Activated T-helper 1 cell treated with anti-CD3 and anti-CD28 coated beads, Interleukin-12 subunit alpha, Interleukin-12 subunit beta, Interleukin-2, Interleukin-4 antibody, amounts not matched to agents 30 ng/mL and 10 ng/mL and 1 ng/mL, durations not matched to agents 14 hours and 24 hours and 36 hours (primary cell): ENCODE measurements at regions of chr3 and their contacts with region 1.

Region 1: GRCh38 chr3:50611464-50612233 is at the start of gene CISH:
- DNase-seq: peak; percentile 98
- H3K4me3 Mint-ChIP-seq: peak within 1 kb of the TSS; percentile 99
- H3K27ac Mint-ChIP-seq: peak within 1 kb of the TSS; percentile 98
- H3K4me1 Mint-ChIP-seq: peaks cover 55% of the 10 kb centered on the region
- H3K27me3 Mint-ChIP-seq: no peaks in the 10 kb centered on the region
- total RNA-seq, gene CISH: 334 and 341 TPM in 2 replicates

Region 2: GRCh38 chr3:50337191-50337841 is 274.3 kb before region 1 on chr3:
- intact Hi-C with region 1: loop called (anchors 5 kb)
- DNase-seq: peak; percentile 96
- H3K4me3 Mint-ChIP-seq: peak overlapping the region; percentile 96
- H3K27ac Mint-ChIP-seq: peak overlapping the region; percentile 97
- H3K4me1 Mint-ChIP-seq: peaks cover 51% of the 10 kb centered on the region
- H3K27me3 Mint-ChIP-seq: no peaks in the 10 kb centered on the region

Region 3: DNA sequence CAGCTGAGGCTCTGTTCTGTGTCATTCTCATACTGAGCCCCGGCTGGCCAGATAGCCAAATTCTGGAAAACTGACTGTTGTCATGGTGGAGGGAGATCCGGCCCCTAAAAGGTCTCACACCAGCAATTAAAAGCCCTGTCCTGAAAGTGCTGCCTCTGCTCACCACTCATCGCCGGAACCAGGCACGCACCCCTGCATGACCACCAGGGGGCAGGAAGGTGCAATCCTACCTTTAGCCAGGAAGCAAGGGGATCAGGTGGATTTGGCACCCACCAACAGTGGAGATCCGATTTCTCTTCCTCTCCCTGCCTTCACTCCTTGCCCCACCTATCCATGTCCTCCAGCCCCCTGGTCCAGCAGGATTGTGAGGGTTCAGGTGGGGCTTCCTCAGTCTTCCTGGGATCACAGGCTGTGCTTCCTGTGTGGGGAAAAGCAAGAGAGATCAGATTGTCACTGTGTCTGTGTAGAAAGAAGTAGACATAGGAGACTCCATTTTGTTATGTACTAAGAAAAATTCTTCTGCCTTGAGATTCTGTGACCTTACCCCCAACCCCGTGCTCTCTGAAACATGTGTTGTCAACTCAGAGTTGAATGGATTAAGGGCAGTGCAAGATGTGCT is 92.1 kb before region 1 on chr3:
- intact Hi-C with region 1: loop called (anchors 1 kb)
- DNase-seq: peak; percentile 64
- H3K4me3 Mint-ChIP-seq: no peak overlapping the region
- H3K27ac Mint-ChIP-seq: no peak overlapping the region
- H3K4me1 Mint-ChIP-seq: peaks cover 5% of the 10 kb centered on the region
- H3K27me3 Mint-ChIP-seq: peaks cover 11% of the 10 kb centered on the region

Region 4: GRCh38 chr3:50600841-50601591 is 10.6 kb before region 1 on chr3:
- intact Hi-C with region 1: loop called (anchors 1 kb)
- DNase-seq: peak; percentile 81
- H3K4me3 Mint-ChIP-seq: peak overlapping the region; percentile 99
- H3K27ac Mint-ChIP-seq: peak overlapping the region; percentile 98
- H3K4me1 Mint-ChIP-seq: peaks cover 83% of the 10 kb centered on the region
- H3K27me3 Mint-ChIP-seq: no peaks in the 10 kb centered on the region

Region 5: GRCh38 chr3:50674349-50675178 is 62.9 kb after region 1 on chr3 and contains the start of gene DOCK3:
- intact Hi-C with region 1: loop called (anchors 2 kb)
- DNase-seq: peak; percentile 59
- H3K4me3 Mint-ChIP-seq: peak within 1 kb of the TSS; percentile 80
- H3K27ac Mint-ChIP-seq: peak within 1 kb of the TSS; percentile 31
- H3K4me1 Mint-ChIP-seq: peaks cover 17% of the 10 kb centered on the region
- H3K27me3 Mint-ChIP-seq: peaks cover 63% of the 10 kb centered on the region
- total RNA-seq, gene DOCK3: 1.5 and 1.6 TPM in 2 replicates

Region 6: DNA sequence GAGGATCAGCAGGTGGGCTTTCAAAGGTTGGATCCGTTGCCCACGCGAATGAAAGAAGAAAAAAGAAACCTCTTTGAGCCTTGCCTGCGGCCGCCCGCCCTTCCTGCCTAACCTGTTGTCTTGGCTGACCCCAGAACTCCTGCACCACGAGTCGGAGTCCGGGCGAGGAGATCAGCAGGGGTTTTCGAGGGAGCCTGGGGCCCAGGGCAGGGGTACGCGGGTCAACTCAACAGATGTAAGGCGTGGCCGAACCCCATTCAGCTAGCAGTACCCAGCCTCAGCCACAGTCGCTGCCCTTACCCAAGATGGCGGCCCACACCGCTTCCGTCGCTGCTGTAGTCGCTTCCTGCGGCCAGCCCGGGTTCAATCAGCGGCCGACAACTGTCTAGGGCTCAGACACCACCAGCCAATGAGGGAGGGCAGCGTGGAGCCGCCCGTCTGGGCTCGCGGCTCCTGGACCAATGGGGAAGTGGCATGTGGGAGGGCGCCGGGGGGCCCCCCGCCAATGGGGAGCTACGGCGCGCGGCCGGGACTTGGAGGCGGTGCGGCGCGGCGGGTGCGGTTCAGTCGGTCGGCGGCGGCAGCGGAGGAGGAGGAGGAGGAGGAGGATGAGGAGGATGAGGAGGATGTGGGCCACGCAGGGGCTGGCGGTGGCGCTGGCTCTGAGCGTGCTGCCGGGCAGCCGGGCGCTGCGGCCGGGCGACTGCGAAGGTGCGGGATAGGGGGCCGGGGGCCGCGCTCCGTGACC is 773.3 kb after region 1 on chr3 and contains the start of gene MANF:
- intact Hi-C with region 1: loop called (anchors 1 kb)
- DNase-seq: peak; percentile 98
- H3K4me3 Mint-ChIP-seq: peak within 1 kb of the TSS; percentile 99
- H3K27ac Mint-ChIP-seq: peak within 1 kb of the TSS; percentile 98
- H3K4me1 Mint-ChIP-seq: peaks cover 54% of the 10 kb centered on the region
- H3K27me3 Mint-ChIP-seq: no peaks in the 10 kb centered on the region
- total RNA-seq, gene MANF: 200 and 208 TPM in 2 replicates

Region 7: GRCh38 chr3:51578238-51578637 is 966.6 kb after region 1 on chr3:
- intact Hi-C with region 1: no loop called
- DNase-seq: no peak
- H3K4me3 Mint-ChIP-seq: no peak overlapping the region
- H3K27ac Mint-ChIP-seq: no peak overlapping the region
- H3K4me1 Mint-ChIP-seq: peaks cover 5% of the 10 kb centered on the region
- H3K27me3 Mint-ChIP-seq: no peaks in the 10 kb centered on the region